Posterior vena cava (tissue), 2 donors: ENCODE measurements at regions of chr7 and their contacts with region 1.

Region 1: GRCh38 chr7:29113384-29114103 is 32.8 kb downstream of the CPVL start:
- DNase-seq: no peak

Region 2: DNA sequence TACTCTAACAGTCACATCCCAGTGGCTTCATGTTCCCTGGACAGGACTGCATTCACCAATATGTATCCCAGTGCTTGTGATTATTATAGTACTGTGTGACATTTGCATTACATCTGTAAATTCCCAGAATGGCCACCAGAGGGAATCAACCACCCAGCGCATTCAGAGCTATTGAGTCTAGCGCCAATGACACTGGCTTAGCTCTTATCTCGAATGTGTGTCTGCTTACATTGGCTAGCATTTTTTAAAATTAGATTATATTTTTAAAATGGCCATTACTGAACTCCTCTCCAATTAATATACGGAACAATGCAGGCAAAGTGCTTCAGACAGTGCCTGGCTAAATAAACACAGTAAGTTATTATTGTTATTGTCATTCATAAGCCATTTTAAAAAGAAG is 191.7 kb before region 1 on chr7:
- intact Hi-C with region 1: loop called in 1 of 2 experiments (anchors 2 kb)
- DNase-seq: no peak

Region 3: GRCh38 chr7:29146057-29146706 is 32.6 kb after region 1 on chr7 and contains the start of gene CPVL:
- intact Hi-C with region 1: no loop called
- DNase-seq: peak; percentile 89
- total RNA-seq, gene CPVL: 23.8 to 44.9 TPM